PC-3 (cell line): ENCODE measurements at regions of chrX and their contacts with region 1.

Region 1: DNA sequence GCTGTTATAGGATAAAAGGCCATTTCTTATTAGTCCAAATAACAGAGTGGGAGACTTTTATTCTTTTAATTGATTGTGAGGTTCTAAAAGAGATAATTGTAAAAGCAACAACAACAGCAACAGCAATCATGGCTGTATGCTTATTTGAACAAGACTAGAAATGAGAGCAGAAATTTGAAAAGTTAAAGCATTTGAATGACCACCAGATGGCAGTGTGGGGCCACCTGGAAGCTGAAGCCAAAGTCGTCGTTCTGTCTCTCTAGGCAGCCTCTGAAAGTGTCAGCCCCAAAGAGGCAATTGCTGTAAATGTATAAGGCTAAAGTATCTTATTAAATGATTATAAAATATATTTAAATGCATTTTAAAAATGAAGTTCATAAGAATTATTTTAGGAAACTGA is 42.2 kb downstream of the SH2D1A start:
- DNase-seq: peak; percentile 64
- ATAC-seq: peak; percentile 77
- H3K4me3 ChIP-seq: no peak overlapping the region
- H3K27ac ChIP-seq: no peak overlapping the region
- H3K4me1 ChIP-seq: peaks cover under 1% of the 10 kb centered on the region
- H3K27me3 ChIP-seq: no peaks in the 10 kb centered on the region
- CTCF ChIP-seq: peak; percentile 58

Region 2: DNA sequence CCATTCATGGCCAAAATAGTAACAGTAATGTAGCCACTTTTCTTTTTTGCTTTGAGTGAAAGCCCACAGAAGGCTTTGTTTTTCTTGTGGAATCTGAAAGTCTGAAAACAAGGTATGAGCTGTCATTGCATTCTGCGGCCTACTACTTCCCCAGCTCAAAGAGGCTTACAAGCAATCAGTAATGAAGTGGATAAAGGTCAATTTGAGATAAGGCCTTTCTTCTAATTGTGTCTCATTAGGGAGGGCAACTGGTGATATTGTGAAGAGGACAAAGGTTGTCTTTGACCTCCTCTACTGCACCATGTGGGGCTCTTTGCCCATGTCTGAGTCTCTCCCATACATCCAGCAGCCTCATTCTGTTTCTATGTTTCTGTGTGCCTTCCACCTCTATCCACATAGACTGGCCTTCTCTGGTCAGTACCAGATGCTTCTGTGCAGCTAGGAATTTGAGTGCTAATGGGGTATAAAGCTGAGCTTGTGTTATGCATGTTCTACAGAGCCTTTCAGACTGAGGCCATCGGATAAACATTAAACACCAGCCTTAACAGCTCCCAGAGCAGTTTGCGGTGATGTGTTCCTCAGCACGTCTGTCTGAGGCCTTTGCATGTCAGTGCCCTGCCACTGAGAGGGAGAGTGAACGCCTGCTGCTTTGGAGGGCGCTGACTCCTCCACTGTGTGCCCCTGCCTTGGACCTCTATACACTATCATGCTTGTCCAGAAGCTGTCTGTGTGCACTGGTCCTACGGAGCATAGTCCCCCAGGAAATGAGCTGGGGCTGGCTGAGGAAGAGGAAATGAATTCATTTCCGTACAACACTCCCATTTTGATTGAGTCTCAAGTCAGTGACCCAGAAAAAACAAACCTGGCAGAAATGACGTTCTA is 38.0 kb after region 1 on chrX:
- CTCF ChIA-PET with region 1: no interaction called
- POLR2A ChIA-PET with region 1: no interaction called
- intact Hi-C with region 1: no loop called
- DNase-seq: no peak
- ATAC-seq: peak; percentile 42; the same call in 1 of the 2 replicates
- H3K4me3 ChIP-seq: no peak overlapping the region
- H3K27ac ChIP-seq: no peak overlapping the region
- H3K4me1 ChIP-seq: peaks cover 7% of the 10 kb centered on the region; the same call in 1 of the 2 replicates
- H3K27me3 ChIP-seq: no peaks in the 10 kb centered on the region
- CTCF ChIP-seq: no peak

Region 3: DNA sequence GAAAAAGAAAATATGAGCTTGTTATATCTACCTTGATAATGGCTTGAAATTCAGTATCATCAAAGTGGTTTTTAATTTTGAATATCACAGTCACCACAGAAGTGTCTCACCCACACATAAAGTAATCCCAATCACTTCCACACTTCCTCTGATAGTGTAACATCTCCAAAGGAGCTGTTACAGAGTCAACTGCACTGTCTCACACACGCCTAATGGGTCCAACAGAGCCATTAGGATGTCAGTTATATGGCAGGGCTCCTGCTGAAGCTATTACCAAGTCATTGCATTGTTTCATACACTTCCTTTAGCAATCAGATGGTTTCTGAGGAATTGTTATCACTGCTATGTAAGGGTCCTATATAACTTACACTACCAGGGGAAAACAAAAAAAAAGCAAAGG is 499.0 kb after region 1 on chrX:
- CTCF ChIA-PET with region 1: no interaction called
- POLR2A ChIA-PET with region 1: no interaction called
- intact Hi-C with region 1: no loop called
- DNase-seq: no peak
- ATAC-seq: no peak
- H3K4me3 ChIP-seq: no peak overlapping the region
- H3K27ac ChIP-seq: no peak overlapping the region
- H3K4me1 ChIP-seq: no peaks in the 10 kb centered on the region
- H3K27me3 ChIP-seq: no peaks in the 10 kb centered on the region
- CTCF ChIP-seq: no peak

Region 4: GRCh38 chrX:125132285-125132684 is 743.7 kb after region 1 on chrX:
- CTCF ChIA-PET with region 1: no interaction called
- POLR2A ChIA-PET with region 1: no interaction called
- intact Hi-C with region 1: loop called (anchors 1 kb)
- DNase-seq: peak; percentile 53
- ATAC-seq: no peak
- H3K4me3 ChIP-seq: no peak overlapping the region
- H3K27ac ChIP-seq: no peak overlapping the region
- H3K4me1 ChIP-seq: no peaks in the 10 kb centered on the region
- H3K27me3 ChIP-seq: no peaks in the 10 kb centered on the region
- CTCF ChIP-seq: peak; percentile 78